Natural killer cell (primary cell): ENCODE measurements at regions of chrX and their contacts with region 1.

Region 1: DNA sequence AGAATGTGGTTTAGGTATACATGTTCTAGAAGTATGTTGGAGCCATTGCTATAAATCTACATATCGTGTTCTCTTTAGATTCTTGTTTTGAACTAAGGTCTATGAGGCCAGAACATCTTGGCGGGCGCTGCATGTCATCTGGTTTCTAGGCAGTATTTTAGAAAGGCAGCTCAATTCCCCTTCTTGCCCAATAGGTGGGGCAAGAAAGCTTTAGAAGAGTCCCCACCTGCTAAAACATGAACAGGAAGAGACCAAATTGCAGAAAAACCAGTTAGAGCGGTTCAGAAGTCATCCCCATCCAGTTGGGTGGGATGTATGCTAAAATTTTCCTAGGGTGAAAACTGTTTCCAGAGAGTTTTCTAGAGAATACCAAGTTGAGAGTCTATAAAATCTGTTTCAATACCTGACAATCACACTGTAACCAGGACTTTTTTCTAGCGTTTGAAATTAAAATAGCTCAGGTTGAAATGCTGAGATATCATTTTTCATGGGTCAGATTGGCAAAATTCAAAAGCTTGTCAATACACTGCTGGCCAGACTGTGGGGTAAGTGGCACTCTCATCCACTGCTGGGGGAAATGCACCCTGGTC is 17.5 kb upstream of the SH3KBP1 start:
- DNase-seq: peak in 1 of 2 donors; percentile 71
- ATAC-seq: peak; percentile 53 to 88 (median 78)
- H3K4me3 ChIP-seq: no peak overlapping the region
- H3K4me3 Mint-ChIP-seq: no peak overlapping the region
- H3K27ac ChIP-seq: no peak overlapping the region
- H3K27ac Mint-ChIP-seq: no peak overlapping the region
- H3K4me1 ChIP-seq: no peaks in the 10 kb centered on the region
- H3K4me1 Mint-ChIP-seq: peaks cover 6 to 7% of the 10 kb centered on the region in 2 donors
- H3K27me3 ChIP-seq: no peaks in the 10 kb centered on the region
- H3K27me3 Mint-ChIP-seq: peaks cover 0 to 6% of the 10 kb centered on the region in 2 donors
- CTCF ChIP-seq: peak; percentile 58

Region 2: DNA sequence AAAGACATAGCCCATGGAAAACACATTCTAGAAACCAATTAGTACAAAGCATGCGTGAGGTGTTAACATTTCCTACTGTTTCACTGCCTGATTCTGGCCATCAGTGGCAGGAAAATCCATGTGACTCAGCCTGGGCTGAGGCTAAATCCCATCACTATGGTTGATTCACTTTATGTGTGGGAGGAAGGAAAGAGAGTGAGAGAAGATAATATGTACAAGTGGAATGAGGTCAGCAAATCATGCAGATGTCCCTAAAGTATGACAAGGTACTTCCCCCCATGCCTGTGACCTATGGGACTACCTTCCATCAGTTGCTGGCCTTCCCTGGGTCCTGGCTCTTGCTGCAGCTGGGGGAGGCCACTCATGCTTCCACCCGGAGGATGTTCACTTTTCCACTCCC is 325.4 kb before region 1 on chrX:
- intact Hi-C with region 1: no loop called
- DNase-seq: no peak
- ATAC-seq: no peak
- H3K4me3 ChIP-seq: no peak overlapping the region
- H3K4me3 Mint-ChIP-seq: no peak overlapping the region
- H3K27ac ChIP-seq: no peak overlapping the region
- H3K27ac Mint-ChIP-seq: peak overlapping the region; percentile 14 to 64
- H3K4me1 ChIP-seq: peaks cover 3% of the 10 kb centered on the region
- H3K4me1 Mint-ChIP-seq: peaks cover 16 to 17% of the 10 kb centered on the region in 2 donors
- H3K27me3 ChIP-seq: no peaks in the 10 kb centered on the region
- H3K27me3 Mint-ChIP-seq: no peaks in the 10 kb centered on the region
- CTCF ChIP-seq: no peak

Region 3: DNA sequence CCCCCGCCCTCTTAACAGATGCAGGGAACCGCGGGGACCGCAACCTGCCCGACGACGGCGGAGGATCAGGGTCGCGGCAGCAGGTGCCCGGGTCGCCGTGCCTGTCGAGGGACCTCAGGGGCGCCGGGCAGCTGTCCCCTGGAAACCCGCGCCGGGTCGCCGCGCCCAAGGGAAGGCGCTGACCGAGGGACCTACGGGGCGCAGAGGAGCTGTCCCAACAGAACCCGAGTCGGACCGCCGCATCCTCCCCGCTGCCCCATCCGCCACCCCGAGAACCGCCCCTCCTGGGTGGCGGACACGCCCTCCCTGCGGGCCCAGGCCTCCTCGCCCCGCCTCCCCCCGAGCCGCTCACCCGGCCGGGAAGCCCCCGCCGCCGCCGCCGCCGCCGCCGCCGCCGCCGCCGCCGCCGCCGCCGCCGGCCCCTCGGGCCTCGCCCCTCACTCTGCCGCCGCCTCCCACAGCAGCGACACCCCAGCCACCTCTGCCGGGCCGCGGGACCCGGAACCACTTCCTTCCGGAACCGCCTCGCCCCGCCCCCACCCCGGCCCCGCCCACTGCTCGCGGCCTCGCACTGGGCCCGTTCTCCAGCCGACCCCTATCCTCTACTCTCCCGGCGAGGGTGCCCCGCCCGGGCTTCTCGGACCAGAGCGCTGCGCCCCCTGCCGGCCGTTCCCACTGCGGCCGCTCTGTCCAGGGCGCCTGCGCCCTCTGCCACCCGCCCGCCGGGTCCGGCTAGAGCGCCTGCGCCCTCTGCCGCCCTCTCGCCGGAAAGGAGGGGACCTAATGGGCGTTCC is 85.9 kb after region 1 on chrX and contains the start of gene BCLAF3:
- intact Hi-C with region 1: loop called (anchors 1 kb)
- DNase-seq: peak; percentile 85 to 89
- ATAC-seq: peak; percentile 87 to 97 (median 88)
- H3K4me3 ChIP-seq: peak within 1 kb of the TSS; percentile 67
- H3K4me3 Mint-ChIP-seq: peak within 1 kb of the TSS; percentile 88
- H3K27ac ChIP-seq: peak within 1 kb of the TSS; percentile 86
- H3K27ac Mint-ChIP-seq: peak within 1 kb of the TSS; percentile 81 to 91
- H3K4me1 ChIP-seq: peaks cover 6% of the 10 kb centered on the region
- H3K4me1 Mint-ChIP-seq: peaks cover 15 to 19% of the 10 kb centered on the region in 2 donors
- H3K27me3 ChIP-seq: no peaks in the 10 kb centered on the region
- H3K27me3 Mint-ChIP-seq: no peaks in the 10 kb centered on the region
- CTCF ChIP-seq: peak; percentile 58
- total RNA-seq, gene BCLAF3: 16.5 to 20.8 (median 20.1) TPM

Region 4: GRCh38 chrX:20116579-20117240 is 211.8 kb after region 1 on chrX and contains the start of gene MAP7D2:
- intact Hi-C with region 1: no loop called
- DNase-seq: no peak
- ATAC-seq: peak in 1 of 3 donors; percentile 22
- H3K4me3 ChIP-seq: no peak within 1 kb of the TSS
- H3K4me3 Mint-ChIP-seq: no peak within 1 kb of the TSS
- H3K27ac ChIP-seq: no peak within 1 kb of the TSS
- H3K27ac Mint-ChIP-seq: no peak within 1 kb of the TSS
- H3K4me1 ChIP-seq: peaks cover 4% of the 10 kb centered on the region
- H3K4me1 Mint-ChIP-seq: peaks cover 0 to 5% of the 10 kb centered on the region in 2 donors
- H3K27me3 ChIP-seq: peaks cover 2% of the 10 kb centered on the region
- H3K27me3 Mint-ChIP-seq: peaks cover 14 to 19% of the 10 kb centered on the region in 2 donors
- CTCF ChIP-seq: no peak
- total RNA-seq, gene MAP7D2: 0.09 to 1.5 TPM in 2 of 3 donors, not detected in the other

Region 5: GRCh38 chrX:20132666-20133065 is 227.8 kb after region 1 on chrX:
- intact Hi-C with region 1: loop called (anchors 5 kb)
- DNase-seq: no peak
- ATAC-seq: no peak
- H3K4me3 ChIP-seq: no peak overlapping the region
- H3K4me3 Mint-ChIP-seq: no peak overlapping the region
- H3K27ac ChIP-seq: no peak overlapping the region
- H3K27ac Mint-ChIP-seq: peak overlapping the region in 1 of 2 donors; percentile 48
- H3K4me1 ChIP-seq: no peaks in the 10 kb centered on the region
- H3K4me1 Mint-ChIP-seq: peaks cover 10% of the 10 kb centered on the region in 2 donors
- H3K27me3 ChIP-seq: no peaks in the 10 kb centered on the region
- H3K27me3 Mint-ChIP-seq: no peaks in the 10 kb centered on the region
- CTCF ChIP-seq: no peak